ENCODE measurements at regions of chr14 and their contacts with region 1.

Region 1: DNA sequence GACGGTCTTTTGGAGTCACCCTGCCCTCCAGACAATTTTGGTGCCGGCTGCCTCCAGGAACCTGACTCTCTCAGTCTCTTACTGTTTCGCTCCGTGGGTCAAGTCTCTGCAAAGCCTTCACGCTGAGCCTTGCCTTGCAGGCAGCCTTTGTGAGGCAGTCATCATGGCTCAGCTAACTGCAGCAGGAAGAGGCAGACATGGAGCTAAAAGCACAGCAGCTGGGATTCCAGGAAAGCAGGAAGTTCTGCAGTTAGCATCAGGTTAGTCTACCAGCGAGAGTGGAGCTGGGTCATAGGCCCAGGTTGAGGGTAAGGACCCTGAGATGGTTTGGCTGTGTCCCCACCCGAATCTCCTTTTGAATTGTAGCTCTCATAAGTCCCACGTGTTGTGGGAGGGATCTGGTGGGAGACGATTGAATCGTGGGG is 305.4 kb downstream of the PCNX1 start:
- DNase-seq: no peak
- ATAC-seq: no peak
- H3K4me3 ChIP-seq: no peak overlapping the region
- H3K4me3 Mint-ChIP-seq: peak overlapping the region in 1 of 10 donors; percentile 26
- H3K27ac ChIP-seq: no peak overlapping the region
- H3K27ac Mint-ChIP-seq: peak overlapping the region in 1 of 9 donors; percentile 55
- H3K4me1 ChIP-seq: no peaks in the 10 kb centered on the region
- H3K4me1 Mint-ChIP-seq: peaks cover 0 to 15% (median 0%) of the 10 kb centered on the region in 7 donors
- H3K27me3 ChIP-seq: no peaks in the 10 kb centered on the region
- H3K27me3 Mint-ChIP-seq: no peaks in the 10 kb centered on the region

Region 2: GRCh38 chr14:71231521-71232393 is 19.1 kb after region 1 on chr14:
- CTCF ChIA-PET with region 1: no interaction called
- POLR2A ChIA-PET with region 1: no interaction called
- intact Hi-C with region 1: no loop called
- DNase-seq: no peak
- ATAC-seq: peak; percentile 45
- H3K4me3 ChIP-seq: no peak overlapping the region
- H3K4me3 Mint-ChIP-seq: no peak overlapping the region
- H3K27ac ChIP-seq: no peak overlapping the region
- H3K27ac Mint-ChIP-seq: peak overlapping the region in 2 of 9 donors; percentile 2 to 9
- H3K4me1 ChIP-seq: no peaks in the 10 kb centered on the region
- H3K4me1 Mint-ChIP-seq: peaks cover 0 to 8% (median 0%) of the 10 kb centered on the region in 7 donors
- H3K27me3 ChIP-seq: no peaks in the 10 kb centered on the region
- H3K27me3 Mint-ChIP-seq: peaks cover 0 to 4% (median 4%) of the 10 kb centered on the region in 5 donors

Region 3: GRCh38 chr14:71242237-71242748 is 29.6 kb after region 1 on chr14:
- CTCF ChIA-PET with region 1: no interaction called
- POLR2A ChIA-PET with region 1: no interaction called
- intact Hi-C with region 1: loop called in 1 of 2 experiments (anchors 5 kb)
- DNase-seq: no peak
- ATAC-seq: no peak
- H3K4me3 ChIP-seq: no peak overlapping the region
- H3K4me3 Mint-ChIP-seq: no peak overlapping the region
- H3K27ac ChIP-seq: no peak overlapping the region
- H3K27ac Mint-ChIP-seq: peak overlapping the region in 2 of 9 donors; percentile 26 to 65
- H3K4me1 ChIP-seq: peaks cover 19 to 20% of the 10 kb centered on the region in 2 donors
- H3K4me1 Mint-ChIP-seq: peaks cover 19 to 52% (median 19%) of the 10 kb centered on the region in 7 donors
- H3K27me3 ChIP-seq: no peaks in the 10 kb centered on the region
- H3K27me3 Mint-ChIP-seq: peaks cover 0 to 4% (median 0%) of the 10 kb centered on the region in 5 donors

Region 4: DNA sequence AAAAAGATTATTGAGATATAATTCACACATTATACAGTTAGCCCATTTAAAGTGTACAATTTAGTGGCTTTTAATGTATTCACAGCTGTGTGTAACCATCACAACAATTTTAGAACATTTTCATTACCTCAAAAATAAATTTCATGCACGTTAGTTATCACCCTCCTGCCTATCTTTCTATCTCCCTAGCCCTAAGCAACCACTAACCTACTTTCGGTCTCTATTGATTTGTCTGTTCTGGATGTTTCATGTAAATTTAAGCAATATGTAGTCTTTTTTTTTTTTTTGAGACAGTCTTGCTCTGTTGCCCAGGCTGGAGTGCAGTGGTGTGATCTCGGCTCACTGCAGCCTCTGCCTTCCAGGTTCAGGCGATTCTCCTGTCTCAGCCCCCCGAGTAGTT is 134.0 kb after region 1 on chr14:
- CTCF ChIA-PET with region 1: no interaction called
- POLR2A ChIA-PET with region 1: no interaction called
- intact Hi-C with region 1: no loop called
- DNase-seq: no peak
- ATAC-seq: peak; percentile 68
- H3K4me3 ChIP-seq: no peak overlapping the region
- H3K4me3 Mint-ChIP-seq: no peak overlapping the region
- H3K27ac ChIP-seq: no peak overlapping the region
- H3K27ac Mint-ChIP-seq: no peak overlapping the region
- H3K4me1 ChIP-seq: no peaks in the 10 kb centered on the region
- H3K4me1 Mint-ChIP-seq: peaks cover 14 to 64% (median 36%) of the 10 kb centered on the region in 7 donors
- H3K27me3 ChIP-seq: no peaks in the 10 kb centered on the region
- H3K27me3 Mint-ChIP-seq: no peaks in the 10 kb centered on the region

Region 5: DNA sequence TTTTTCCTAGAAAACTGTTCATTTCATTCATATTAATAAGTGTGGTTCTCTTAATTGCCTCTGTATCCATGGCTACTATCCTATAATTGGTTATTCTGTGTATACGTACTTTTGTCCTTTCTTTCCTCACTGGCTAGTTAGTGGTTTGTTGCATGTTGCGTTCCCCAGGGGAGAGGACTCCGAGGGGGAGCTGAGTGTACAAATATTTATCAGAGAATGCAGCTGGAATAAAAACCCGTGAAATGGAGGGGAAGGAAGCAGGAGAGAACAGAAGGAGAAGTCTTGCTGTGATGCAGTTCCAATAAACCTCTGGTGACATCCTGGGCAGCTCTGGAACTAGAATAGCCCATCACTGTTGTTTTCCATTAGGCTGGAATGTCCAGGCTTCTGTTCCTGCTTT is 602.4 kb after region 1 on chr14:
- CTCF ChIA-PET with region 1: no interaction called
- POLR2A ChIA-PET with region 1: no interaction called
- intact Hi-C with region 1: no loop called
- DNase-seq: no peak
- ATAC-seq: no peak
- H3K4me3 ChIP-seq: no peak overlapping the region
- H3K4me3 Mint-ChIP-seq: no peak overlapping the region
- H3K27ac ChIP-seq: no peak overlapping the region
- H3K27ac Mint-ChIP-seq: no peak overlapping the region
- H3K4me1 ChIP-seq: no peaks in the 10 kb centered on the region
- H3K4me1 Mint-ChIP-seq: no peaks in the 10 kb centered on the region
- H3K27me3 ChIP-seq: no peaks in the 10 kb centered on the region
- H3K27me3 Mint-ChIP-seq: peaks cover 17 to 44% (median 28%) of the 10 kb centered on the region in 5 donors

Region 6: DNA sequence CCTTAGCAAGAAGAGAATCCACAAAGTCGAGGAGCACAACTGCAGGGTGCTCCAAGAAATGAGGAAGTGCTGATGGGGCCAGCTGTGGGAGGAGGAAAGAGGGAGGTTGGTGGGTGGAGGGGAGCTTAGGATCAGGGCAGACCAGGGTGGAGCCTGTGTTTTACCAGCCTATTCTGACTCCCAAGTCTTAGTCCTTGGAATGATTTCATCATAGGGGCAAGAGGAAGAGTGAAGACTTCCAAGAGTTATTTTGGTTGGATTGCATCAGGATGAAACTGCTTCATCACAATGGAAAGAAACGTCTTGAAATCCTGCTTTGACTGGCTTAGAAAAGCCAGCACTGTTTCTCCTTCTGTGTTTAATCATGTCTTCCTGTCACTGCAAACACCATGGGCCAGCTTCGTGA is 1487.2 kb after region 1 on chr14:
- CTCF ChIA-PET with region 1: no interaction called
- POLR2A ChIA-PET with region 1: no interaction called
- intact Hi-C with region 1: no loop called
- DNase-seq: no peak
- ATAC-seq: peak; percentile 51
- H3K4me3 ChIP-seq: no peak overlapping the region
- H3K4me3 Mint-ChIP-seq: no peak overlapping the region
- H3K27ac ChIP-seq: no peak overlapping the region
- H3K27ac Mint-ChIP-seq: no peak overlapping the region
- H3K4me1 ChIP-seq: no peaks in the 10 kb centered on the region
- H3K4me1 Mint-ChIP-seq: peaks cover 0 to 12% (median 0%) of the 10 kb centered on the region in 7 donors
- H3K27me3 ChIP-seq: no peaks in the 10 kb centered on the region
- H3K27me3 Mint-ChIP-seq: peaks cover 0 to 3% (median 0%) of the 10 kb centered on the region in 5 donors

Measured in naive thymus-derived CD4-positive, alpha-beta T cell (primary cell).